BJ (cell line): ENCODE measurements at regions of chr16 and their contacts with region 1.

Region 1: GRCh38 chr16:30585400-30586189 is at the start of gene ZNF785:
- DNase-seq: peak; percentile 98
- H3K4me3 ChIP-seq: peak within 1 kb of the TSS; percentile 73
- H3K27me3 ChIP-seq: no peaks in the 10 kb centered on the region
- CTCF ChIP-seq: no peak
- polyA plus RNA-seq, gene ZNF785: 6.6 TPM in 2 replicates

Region 2: GRCh38 chr16:30571695-30572600 is 13.6 kb before region 1 on chr16 and contains the start of gene ZNF688:
- CTCF ChIA-PET with region 1: interaction called, 3 read pairs
- POLR2A ChIA-PET with region 1: interaction called, 14 read pairs
- DNase-seq: peak; percentile 96
- H3K4me3 ChIP-seq: peak within 1 kb of the TSS; percentile 51
- H3K27me3 ChIP-seq: no peaks in the 10 kb centered on the region
- CTCF ChIP-seq: no peak
- polyA plus RNA-seq, gene ZNF688: 6.3 and 8.8 TPM in 2 replicates

Region 3: GRCh38 chr16:30602616-30603277 is 17.2 kb after region 1 on chr16:
- CTCF ChIA-PET with region 1: interaction called, 15 read pairs
- POLR2A ChIA-PET with region 1: no interaction called
- DNase-seq: no peak
- H3K4me3 ChIP-seq: no peak overlapping the region
- H3K27me3 ChIP-seq: no peaks in the 10 kb centered on the region
- CTCF ChIP-seq: no peak